Head of caudate nucleus (tissue), 42 donors: ENCODE measurements at regions of chr21 and their contacts with region 1.

Region 1: GRCh38 chr21:37072988-37073416 is at the starts of genes PIGP and TTC3:
- DNase-seq: peak; percentile 86 to 98 (median 96)

Region 2: GRCh38 chr21:36989699-36990507 is 83.1 kb before region 1 on chr21:
- intact Hi-C with region 1: loop called (anchors 2 kb)
- DNase-seq: peak; percentile 65 to 96 (median 91)

Region 3: DNA sequence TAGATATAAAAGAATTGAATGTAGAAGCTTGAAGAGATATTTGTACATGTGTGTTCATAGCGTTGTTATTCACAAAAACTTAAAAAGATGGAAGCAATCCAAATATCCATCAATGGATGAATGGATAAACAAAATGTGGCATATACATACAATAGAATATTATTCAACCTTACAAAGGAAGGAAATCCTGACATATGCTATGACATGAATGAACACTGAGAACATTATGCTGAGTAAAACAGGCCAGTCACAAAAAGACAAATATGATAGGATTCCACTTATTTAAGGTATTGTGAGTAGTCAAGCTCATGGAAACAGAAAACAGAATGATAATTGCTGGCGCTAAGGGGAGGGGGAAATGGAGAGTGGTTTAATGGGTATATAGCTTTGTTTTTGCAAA is 246.5 kb after region 1 on chr21:
- intact Hi-C with region 1: no loop called
- DNase-seq: no peak

Region 4: DNA sequence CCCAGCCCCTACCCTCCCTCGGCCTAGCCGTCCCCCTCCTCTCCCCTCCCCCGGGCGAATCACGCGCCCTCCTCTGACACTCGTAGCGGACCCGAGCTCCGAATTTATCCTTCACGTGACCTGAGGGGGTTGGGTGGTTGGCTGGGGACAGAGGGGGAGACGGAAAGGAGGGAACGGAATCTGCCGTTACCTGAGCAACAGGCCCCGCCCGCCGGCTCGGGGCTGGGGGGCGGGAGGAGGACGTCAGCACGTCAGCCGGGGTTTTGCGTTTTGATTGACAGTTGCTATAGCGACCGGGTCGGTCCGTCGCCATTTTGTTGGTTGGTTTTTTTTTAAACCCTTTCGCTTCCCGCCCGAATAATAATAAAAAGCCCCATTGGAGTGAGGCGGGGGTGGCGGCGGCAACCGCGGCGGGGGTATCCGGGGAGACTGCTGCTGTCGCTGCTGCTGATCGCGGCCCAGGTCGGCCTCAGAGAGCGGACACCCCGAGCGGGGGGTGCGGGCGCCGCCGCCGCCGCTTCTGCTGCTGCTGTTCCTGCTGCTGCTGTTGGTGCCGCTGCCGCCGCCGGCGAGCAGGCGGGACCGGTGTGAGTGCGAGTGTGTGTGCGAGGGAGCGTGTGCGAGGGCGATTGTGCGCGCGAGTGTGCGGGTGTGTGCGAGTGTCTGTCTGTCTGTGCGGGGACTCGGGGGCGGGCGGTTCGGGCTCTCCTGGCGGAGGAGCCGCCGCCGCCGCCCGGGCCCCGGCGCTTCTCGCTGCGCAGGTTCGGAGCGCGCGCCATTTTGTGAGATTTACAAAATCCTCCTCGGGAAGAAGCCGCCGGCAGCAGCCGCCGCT is 293.7 kb after region 1 on chr21 and contains the start of gene DYRK1A:
- intact Hi-C with region 1: loop called (anchors 5 kb)
- DNase-seq: peak; percentile 97 to 100 (median 99)

Region 5: DNA sequence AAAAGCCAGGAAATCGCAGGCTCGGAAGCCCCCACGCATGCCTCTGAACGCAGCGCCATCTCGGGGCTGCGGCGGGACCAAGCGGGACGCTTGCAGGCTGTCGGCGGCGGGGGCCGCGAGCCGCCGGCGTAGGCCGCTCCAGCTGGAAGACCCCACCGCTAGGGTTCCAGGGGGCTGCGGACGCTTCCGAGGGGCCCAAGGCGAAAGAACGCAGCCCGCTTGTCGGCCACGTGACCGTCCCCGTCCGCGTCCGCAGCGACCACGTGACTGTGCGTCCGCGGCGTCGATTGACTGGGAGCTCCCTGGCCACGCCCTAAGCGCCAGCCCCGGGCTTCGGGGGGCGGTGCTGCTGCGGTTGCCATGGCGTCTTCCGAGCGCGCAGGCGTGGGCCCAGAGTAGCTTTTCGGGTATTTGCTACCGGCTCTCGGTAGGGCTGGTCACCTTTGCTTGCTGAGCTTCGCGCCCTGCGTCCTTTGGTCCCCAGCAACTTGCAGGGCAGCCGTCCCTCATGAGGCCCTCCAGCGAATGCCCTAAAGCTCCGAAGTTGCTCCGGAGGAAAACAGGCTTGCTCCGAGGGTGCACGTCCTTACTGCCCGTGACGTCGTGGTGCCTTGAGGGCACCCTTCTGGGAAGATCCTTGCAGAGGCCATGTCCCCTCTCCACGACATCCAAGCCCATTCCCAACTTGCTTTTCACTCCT is 490.8 kb after region 1 on chr21:
- intact Hi-C with region 1: loop called (anchors 10 kb)
- DNase-seq: peak; percentile 88 to 98 (median 95)